Vagina (tissue), 2 donors: ENCODE measurements at regions of chr7 and their contacts with region 1.

Region 1: GRCh38 chr7:112630565-112630964 is 149.8 kb downstream of the LSMEM1 start:
- DNase-seq: no peak
- H3K4me3 ChIP-seq: no peak overlapping the region
- H3K27ac ChIP-seq: no peak overlapping the region
- H3K4me1 ChIP-seq: no peaks in the 10 kb centered on the region
- H3K27me3 ChIP-seq: no peaks in the 10 kb centered on the region
- CTCF ChIP-seq: no peak
- POLR2A ChIP-seq: no peak

Region 2: DNA sequence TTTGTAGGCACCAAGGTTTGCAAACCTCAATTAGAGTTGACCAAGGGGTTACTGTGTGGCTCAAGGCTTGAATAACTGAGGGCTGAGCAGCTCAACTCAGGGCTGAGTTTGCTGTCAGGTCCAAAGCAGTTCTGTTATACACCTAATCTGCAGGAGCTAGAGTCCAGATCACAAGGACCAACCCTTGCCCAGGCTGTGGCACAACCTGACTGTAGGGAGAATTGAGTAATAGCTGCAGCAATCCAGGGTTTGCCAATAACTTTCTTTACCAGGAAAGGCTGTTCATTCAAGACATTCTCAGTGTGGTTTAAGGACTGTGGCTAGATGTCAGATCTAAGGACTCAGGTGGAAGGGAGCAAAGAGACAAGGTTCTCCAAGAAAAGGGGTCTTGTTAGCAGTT is 952.7 kb before region 1 on chr7:
- intact Hi-C with region 1: no loop called
- DNase-seq: no peak
- H3K4me3 ChIP-seq: no peak overlapping the region
- H3K27ac ChIP-seq: no peak overlapping the region
- H3K4me1 ChIP-seq: no peaks in the 10 kb centered on the region
- H3K27me3 ChIP-seq: no peaks in the 10 kb centered on the region
- CTCF ChIP-seq: no peak
- POLR2A ChIP-seq: no peak

Region 3: GRCh38 chr7:112481833-112482670 is 148.5 kb before region 1 on chr7:
- intact Hi-C with region 1: no loop called
- DNase-seq: no peak
- H3K4me3 ChIP-seq: no peak overlapping the region
- H3K27ac ChIP-seq: peak overlapping the region; percentile 69
- H3K4me1 ChIP-seq: peaks cover 43% of the 10 kb centered on the region
- H3K27me3 ChIP-seq: no peaks in the 10 kb centered on the region
- CTCF ChIP-seq: no peak
- POLR2A ChIP-seq: no peak

Region 4: GRCh38 chr7:114109721-114110120 is 1479.2 kb after region 1 on chr7:
- intact Hi-C with region 1: loop called (anchors 5 kb)
- DNase-seq: no peak
- H3K4me3 ChIP-seq: no peak overlapping the region
- H3K27ac ChIP-seq: no peak overlapping the region
- H3K4me1 ChIP-seq: peaks cover 5% of the 10 kb centered on the region
- H3K27me3 ChIP-seq: no peaks in the 10 kb centered on the region
- CTCF ChIP-seq: no peak
- POLR2A ChIP-seq: no peak

Region 5: DNA sequence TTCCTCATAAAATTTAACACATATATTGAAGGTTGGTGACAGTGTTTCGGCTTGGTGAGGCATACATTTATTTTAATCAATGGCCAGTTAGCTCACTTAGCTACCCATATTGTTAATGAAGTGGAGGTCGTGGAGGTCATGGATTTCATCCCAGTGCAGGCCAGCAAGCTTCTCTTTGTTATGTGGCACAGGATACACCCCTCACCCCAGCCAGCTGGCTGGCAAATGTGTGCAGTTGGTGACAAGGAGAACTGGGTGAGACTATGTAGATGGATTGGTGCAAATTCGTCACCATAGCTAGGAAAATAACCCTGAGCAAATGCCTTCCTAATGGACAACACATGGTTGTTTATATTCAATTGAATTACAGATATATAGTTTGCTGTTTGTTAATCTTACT is 1733.6 kb after region 1 on chr7:
- intact Hi-C with region 1: no loop called
- DNase-seq: no peak
- H3K4me3 ChIP-seq: no peak overlapping the region
- H3K27ac ChIP-seq: no peak overlapping the region
- H3K4me1 ChIP-seq: no peaks in the 10 kb centered on the region
- H3K27me3 ChIP-seq: no peaks in the 10 kb centered on the region
- CTCF ChIP-seq: no peak
- POLR2A ChIP-seq: no peak